ENCODE measurements at regions of chr15 and their contacts with region 1.

Region 1: DNA sequence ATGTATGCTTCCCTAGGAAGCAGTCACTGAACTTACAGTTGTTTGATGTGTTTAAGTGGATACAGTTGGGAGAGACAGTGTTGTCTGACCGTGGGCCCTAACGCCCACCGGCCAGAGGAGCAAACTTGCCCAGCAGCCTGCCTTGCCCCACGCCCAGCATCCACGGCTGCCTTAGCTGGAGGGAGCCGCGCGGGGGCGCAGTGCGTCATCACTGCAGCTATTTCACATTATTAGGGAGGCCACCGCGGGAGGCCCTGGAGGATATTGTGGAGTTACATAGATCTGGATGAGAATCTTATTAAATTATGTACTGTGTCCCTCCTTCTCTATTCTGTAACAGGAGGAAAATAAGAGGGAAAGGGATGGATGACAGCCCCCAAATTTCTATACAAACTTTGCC is 267.2 kb downstream of the GABRG3 start:
- DNase-seq: no peak
- H3K4me3 Mint-ChIP-seq: no peak overlapping the region
- H3K27ac Mint-ChIP-seq: no peak overlapping the region
- H3K4me1 Mint-ChIP-seq: no peaks in the 10 kb centered on the region
- H3K27me3 Mint-ChIP-seq: no peaks in the 10 kb centered on the region

Region 2: DNA sequence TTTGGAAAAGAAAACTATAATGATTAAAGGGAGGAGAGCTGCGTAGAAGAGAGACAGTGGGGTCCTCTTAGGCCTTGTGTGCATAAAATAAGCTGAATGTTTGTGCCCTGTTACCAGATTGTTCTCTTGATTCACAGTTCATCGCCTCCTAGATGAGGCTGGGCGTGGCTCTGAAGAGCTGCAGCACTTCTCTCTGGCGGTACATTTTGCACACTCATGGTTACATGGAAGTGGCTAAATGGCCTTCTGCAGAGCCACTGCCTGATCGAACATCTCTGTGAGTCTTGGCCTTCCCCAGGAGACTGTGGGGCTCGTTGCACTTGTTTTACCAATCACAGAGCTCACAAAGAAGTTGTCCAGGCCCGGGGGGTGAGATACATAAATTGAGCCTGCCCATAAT is 58.4 kb before region 1 on chr15:
- CTCF ChIA-PET with region 1: no interaction called
- intact Hi-C with region 1: loop called (anchors 10 kb)
- DNase-seq: no peak
- H3K4me3 Mint-ChIP-seq: no peak overlapping the region
- H3K27ac Mint-ChIP-seq: no peak overlapping the region
- H3K4me1 Mint-ChIP-seq: no peaks in the 10 kb centered on the region
- H3K27me3 Mint-ChIP-seq: no peaks in the 10 kb centered on the region

Region 3: DNA sequence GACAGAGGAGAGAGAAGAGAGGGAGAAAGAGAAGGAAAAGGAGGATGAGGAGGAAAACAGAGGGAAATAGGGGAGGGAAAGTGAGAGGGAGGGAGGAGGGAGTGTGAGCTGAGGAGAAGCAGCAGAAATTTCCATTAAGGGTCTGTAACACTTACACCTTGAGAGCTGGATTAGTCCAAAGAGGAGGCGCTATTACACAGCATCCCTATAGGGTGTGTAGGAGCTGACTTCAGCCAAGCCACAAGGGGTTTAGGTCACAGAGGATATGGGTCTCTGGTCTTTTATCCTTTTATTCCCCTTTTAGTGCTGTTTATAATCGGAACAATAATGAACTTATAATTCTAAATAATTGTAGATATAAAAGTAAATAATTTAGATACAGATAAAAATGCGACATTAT is 36.8 kb before region 1 on chr15:
- CTCF ChIA-PET with region 1: no interaction called
- intact Hi-C with region 1: no loop called
- DNase-seq: no peak
- H3K4me3 Mint-ChIP-seq: no peak overlapping the region
- H3K27ac Mint-ChIP-seq: no peak overlapping the region
- H3K4me1 Mint-ChIP-seq: no peaks in the 10 kb centered on the region
- H3K27me3 Mint-ChIP-seq: no peaks in the 10 kb centered on the region

Measured in activated naive CD4-positive, alpha-beta T cell treated with anti-CD3 and anti-CD28 coated beads for 36 hours (primary cell).